Naive thymus-derived CD8-positive, alpha-beta T cell (primary cell): ENCODE measurements at regions of chr11 and their contacts with region 1.

Region 1: DNA sequence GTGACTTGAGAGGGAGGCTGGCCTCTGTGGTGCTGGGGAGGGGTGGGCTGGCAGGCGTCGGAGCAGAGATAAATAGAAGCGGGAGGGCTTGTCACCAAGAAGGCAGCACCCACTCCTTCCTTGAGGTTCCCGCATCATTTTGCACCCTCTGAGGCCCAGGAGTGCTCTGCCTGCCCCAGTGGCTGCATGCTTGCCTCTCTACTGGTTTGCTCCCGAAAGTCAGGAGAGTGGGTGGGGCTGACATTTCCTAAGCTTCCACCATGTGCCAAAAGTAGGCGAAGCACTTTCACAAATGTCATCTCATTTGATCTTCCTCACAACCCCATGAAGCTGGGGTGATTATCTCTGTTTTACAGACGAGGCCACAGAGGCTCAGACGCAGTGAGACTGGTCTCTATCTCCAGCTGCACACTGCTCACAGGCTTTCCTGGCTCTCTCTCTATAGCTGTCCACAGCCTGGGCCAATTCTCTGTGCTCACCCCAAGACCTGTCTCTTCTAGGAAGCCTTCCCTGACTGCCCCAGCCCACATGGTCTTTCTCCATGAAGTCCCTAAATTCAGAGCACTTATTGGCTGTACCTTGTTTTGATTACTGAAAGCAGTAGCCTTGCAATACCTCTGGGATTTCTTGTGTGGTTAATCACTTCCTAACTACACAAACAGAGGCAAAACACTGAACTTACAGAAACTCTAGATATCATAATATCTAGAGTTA is 2.6 kb upstream of the UCP3 start:
- DNase-seq: peak in 5 of 10 donors; percentile 32 to 55 (median 35)
- ATAC-seq: peak; percentile 77 to 82
- H3K4me3 Mint-ChIP-seq: peak overlapping the region in 9 of 10 donors; percentile 20 to 82 (median 66)
- H3K27ac Mint-ChIP-seq: peak overlapping the region; percentile 90 to 99 (median 95)
- H3K4me1 Mint-ChIP-seq: peaks cover 53 to 94% (median 88%) of the 10 kb centered on the region in 4 donors
- H3K27me3 Mint-ChIP-seq: no peaks in the 10 kb centered on the region

Region 2: DNA sequence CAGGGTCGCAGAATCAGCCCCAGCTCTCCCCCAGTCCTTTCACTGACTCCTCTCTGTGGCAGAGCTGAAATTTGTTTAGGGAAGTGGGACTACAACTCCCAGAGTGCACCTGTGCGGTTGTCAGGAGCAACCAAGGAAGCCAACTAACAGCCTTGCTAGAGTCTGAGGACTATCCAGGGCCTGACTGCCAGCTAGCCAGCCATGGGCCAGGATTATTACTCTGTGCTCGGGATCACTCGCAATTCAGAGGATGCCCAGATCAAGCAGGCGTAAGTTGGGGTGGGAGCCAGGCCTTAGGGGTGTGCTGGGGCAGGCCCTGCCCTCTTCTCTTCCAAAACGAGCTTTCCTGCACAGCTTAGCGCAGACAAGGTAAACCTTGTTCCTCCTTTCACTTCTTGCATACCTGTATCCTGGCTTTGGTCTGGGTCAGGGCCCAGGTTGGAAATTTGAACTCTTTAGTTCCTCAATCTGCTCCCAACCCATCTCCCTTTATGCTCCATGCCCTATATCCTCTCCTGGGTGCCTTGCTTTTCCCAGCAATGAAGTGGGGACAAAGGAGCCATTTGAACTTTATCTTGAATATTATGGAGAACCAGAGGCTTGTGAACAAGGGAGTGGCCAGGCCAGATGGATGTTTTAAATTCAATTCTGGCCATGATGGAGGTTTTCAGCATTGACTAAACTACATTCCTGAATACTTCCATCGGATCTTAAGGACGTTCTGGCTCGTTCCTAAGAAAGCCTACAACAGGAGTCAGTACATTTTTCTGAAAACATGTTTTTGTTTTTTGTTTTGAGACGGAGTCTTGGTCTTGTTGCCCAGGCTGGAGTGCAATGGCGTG is 60.4 kb before region 1 on chr11 and contains the start of gene DNAJB13:
- POLR2A ChIA-PET with region 1: no interaction called
- DNase-seq: peak in 1 of 10 donors; percentile 21
- ATAC-seq: no peak
- H3K4me3 Mint-ChIP-seq: no peak within 1 kb of the TSS
- H3K27ac Mint-ChIP-seq: peak within 1 kb of the TSS in 3 of 10 donors; percentile 12 to 65 (median 62)
- H3K4me1 Mint-ChIP-seq: peaks cover 0 to 3% (median under 1%) of the 10 kb centered on the region in 4 donors
- H3K27me3 Mint-ChIP-seq: peaks cover 0 to 9% (median 5%) of the 10 kb centered on the region in 5 donors
- polyA plus RNA-seq, gene DNAJB13: 0.16 to 0.51 (median 0.46) TPM

Region 3: DNA sequence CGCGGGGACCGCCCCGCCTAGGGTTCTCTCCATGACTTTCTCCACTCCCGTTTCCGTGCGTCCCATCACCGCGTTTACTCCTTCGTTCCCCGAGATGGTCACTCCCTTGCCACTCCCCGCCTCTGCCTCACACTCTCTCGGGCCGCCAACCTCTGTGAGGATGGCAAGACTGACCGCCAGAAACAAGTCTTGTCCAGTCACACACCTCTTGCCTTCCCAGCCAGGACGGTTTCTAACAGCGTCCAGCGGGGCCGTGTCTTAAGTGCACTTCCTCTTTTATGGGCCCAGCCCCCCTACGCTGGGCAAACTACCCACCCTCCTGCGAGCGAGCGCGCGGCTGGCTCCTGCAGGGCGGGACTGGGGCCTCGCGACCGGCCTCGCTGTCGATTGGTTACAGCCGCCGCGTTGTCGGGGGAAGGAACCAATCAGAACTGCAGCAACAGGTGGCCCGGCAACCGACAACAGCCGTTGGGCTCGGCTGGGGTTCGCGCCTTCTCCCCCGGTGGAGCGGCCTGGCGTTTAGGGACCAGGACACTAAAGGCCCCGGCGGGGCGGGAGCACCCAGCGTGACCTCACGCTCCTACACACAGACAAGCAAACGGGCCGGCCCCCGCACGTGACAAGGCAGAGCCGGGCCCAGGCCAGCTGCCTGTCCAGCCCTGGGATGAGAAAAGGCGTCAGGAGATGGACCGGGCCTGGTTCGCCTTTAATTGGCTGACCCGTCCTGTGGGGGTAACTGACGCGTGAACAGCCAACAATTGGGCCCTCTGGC is 28.4 kb before region 1 on chr11:
- POLR2A ChIA-PET with region 1: interaction called, 1,033 read pairs
- DNase-seq: peak; percentile 86 to 97 (median 92)
- ATAC-seq: peak; percentile 70 to 75
- H3K4me3 Mint-ChIP-seq: peak overlapping the region; percentile 95 to 100 (median 99)
- H3K27ac Mint-ChIP-seq: peak overlapping the region; percentile 98 to 100 (median 100)
- H3K4me1 Mint-ChIP-seq: peaks cover 26 to 59% (median 39%) of the 10 kb centered on the region in 4 donors
- H3K27me3 Mint-ChIP-seq: no peaks in the 10 kb centered on the region

Region 4: DNA sequence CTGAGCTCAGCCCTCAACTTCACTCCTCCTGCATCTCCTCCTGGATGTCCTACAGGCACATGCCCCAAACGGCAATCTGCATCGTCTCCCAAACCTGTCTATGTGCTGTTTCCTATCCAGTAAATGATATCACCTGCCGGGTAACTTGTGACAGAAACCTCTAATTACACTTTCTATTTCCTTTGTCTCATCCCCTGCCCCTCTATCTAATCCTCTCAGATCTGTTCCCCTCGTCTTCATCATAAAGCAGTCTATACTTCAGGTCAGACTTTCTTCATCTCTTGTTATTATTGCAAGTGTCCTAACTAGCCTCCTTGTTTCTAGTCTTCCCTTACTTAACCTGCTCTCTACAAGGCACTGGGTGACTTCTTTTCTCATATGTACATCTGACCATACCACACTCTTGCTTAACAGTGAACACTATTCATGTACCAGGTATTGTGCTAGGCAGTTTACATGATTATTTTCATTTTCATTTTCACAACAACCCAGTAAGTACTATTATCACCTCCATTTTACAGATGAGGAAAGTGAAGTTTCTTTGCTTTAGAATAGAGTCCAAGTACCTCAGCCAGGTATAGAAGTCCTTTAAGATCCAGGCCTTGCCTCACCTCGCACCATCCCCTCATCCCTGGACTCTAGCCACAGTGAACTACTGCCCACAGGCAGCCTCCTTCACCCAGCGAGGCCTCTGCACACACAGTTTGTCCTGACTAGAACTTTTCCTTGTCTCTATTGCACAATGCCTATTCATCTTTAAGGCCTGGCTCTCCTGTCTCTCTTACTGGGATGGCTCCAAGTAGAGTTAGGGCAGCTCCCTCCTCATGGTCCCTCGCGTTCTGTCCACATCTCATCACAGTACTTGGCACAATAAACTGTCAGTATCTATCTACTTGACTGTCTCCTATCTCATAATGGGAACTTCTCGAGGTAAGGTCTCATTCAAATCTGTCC is 19.5 kb after region 1 on chr11:
- POLR2A ChIA-PET with region 1: interaction called, 12 read pairs
- DNase-seq: no peak
- ATAC-seq: no peak
- H3K4me3 Mint-ChIP-seq: peak overlapping the region in 6 of 10 donors; percentile 4 to 67 (median 18)
- H3K27ac Mint-ChIP-seq: peak overlapping the region; percentile 16 to 77 (median 63)
- H3K4me1 Mint-ChIP-seq: peaks cover 14 to 34% (median 31%) of the 10 kb centered on the region in 4 donors
- H3K27me3 Mint-ChIP-seq: no peaks in the 10 kb centered on the region

Region 5: DNA sequence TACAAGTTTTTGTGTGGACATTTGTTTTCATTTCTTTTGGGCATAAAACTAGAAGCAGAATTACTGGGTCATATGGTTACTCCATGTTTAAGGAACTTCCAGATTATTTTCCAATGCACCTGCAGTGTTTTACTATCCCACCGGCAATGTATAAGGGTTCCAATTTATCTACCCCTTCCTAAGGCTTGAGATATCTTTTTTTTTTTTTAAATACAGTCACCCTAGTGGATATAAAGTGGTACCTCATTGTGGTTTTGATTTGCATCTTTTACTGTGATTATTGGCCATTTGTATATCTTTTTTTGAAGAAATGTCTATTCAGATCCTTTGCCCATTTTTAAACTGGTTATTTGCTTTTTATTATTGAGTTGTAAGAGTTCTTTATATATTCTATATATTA is 31.9 kb after region 1 on chr11:
- POLR2A ChIA-PET with region 1: no interaction called
- DNase-seq: no peak
- ATAC-seq: no peak
- H3K4me3 Mint-ChIP-seq: no peak overlapping the region
- H3K27ac Mint-ChIP-seq: peak overlapping the region in 1 of 10 donors; percentile 24
- H3K4me1 Mint-ChIP-seq: peaks cover 0 to 2% (median 0%) of the 10 kb centered on the region in 4 donors
- H3K27me3 Mint-ChIP-seq: no peaks in the 10 kb centered on the region

Region 6: DNA sequence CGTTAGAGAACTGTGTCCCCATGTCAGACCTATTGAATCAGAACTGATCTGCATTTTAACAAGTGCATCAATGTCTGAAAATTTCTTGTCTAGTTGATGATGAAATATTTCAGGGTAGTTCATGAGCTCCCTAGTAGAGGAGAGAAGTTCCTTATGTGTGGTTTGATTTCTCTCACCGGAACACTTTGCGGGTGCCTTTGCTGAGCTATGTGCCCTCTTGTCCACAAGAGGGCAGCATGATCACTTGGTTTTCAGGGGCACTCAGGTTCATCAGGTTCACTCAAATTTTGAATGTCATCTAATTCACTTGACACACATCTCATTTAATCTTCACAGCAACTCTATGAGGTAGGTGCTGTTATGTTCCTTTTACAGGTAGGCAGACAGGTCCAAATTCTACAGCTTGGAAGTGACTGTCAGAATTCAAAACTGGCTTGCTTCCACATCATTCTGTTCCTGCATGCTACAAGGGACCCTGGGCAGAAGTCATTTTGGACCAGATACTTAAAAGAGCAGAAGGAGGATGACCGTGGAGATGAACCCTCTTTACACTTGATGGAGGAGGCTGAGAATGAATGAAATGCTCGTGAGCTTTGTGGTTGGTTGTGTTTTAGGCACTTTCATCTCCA is 244.3 kb after region 1 on chr11:
- POLR2A ChIA-PET with region 1: no interaction called
- DNase-seq: peak; percentile 11 to 74 (median 53)
- ATAC-seq: peak; percentile 73 to 75
- H3K4me3 Mint-ChIP-seq: no peak overlapping the region
- H3K27ac Mint-ChIP-seq: peak overlapping the region in 2 of 10 donors; percentile 17 to 50
- H3K4me1 Mint-ChIP-seq: peaks cover 0 to 7% (median 4%) of the 10 kb centered on the region in 4 donors
- H3K27me3 Mint-ChIP-seq: no peaks in the 10 kb centered on the region